PC-3 (cell line): ENCODE measurements at regions of chr4 and their contacts with region 1.

Region 1: DNA sequence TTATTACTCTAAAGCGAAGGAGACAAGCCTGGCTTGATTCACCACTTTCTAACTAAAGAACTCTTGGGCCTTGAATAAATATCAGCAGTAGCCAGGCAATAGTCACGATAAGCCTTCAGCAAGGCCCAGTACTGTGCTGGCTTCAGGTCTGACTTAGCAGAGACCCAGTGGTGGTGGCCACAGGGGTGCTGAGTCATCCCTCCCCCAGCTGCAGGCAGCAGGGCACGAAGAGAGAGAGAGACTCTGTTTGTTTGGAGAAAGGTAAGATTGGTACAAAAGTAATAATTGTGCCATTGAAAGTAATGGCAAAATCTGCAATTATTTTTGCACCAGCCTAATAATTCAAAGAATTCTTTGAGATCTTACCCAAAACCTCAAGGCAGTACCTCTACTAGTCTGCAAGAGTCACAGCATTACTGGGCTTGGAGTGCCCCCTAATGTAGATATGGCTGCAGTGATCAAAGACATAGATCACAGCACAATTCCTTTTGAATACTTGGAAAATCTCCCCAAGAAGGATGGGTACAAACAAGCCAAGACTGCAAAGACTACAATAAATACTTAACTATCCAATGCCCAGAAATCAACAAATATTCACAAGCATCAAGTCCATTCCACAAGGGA is 159.5 kb upstream of the USP38 start:
- DNase-seq: peak; percentile 55
- ATAC-seq: peak; percentile 75
- H3K4me3 ChIP-seq: no peak overlapping the region
- H3K27ac ChIP-seq: no peak overlapping the region
- H3K4me1 ChIP-seq: peaks cover 21% of the 10 kb centered on the region
- H3K27me3 ChIP-seq: no peaks in the 10 kb centered on the region
- CTCF ChIP-seq: peak; percentile 77

Region 2: GRCh38 chr4:142984871-142985585 is 40.2 kb before region 1 on chr4:
- CTCF ChIA-PET with region 1: no interaction called
- POLR2A ChIA-PET with region 1: no interaction called
- intact Hi-C with region 1: loop called (anchors 2 kb)
- DNase-seq: peak; percentile 60
- ATAC-seq: peak; percentile 82
- H3K4me3 ChIP-seq: no peak overlapping the region
- H3K27ac ChIP-seq: no peak overlapping the region
- H3K4me1 ChIP-seq: no peaks in the 10 kb centered on the region
- H3K27me3 ChIP-seq: peaks cover 53% of the 10 kb centered on the region
- CTCF ChIP-seq: peak; percentile 83

Region 3: GRCh38 chr4:143059289-143059688 is 34.1 kb after region 1 on chr4:
- CTCF ChIA-PET with region 1: interaction called, 18 read pairs
- POLR2A ChIA-PET with region 1: no interaction called
- intact Hi-C with region 1: no loop called
- DNase-seq: no peak
- ATAC-seq: no peak
- H3K4me3 ChIP-seq: no peak overlapping the region
- H3K27ac ChIP-seq: no peak overlapping the region
- H3K4me1 ChIP-seq: peaks cover 1% of the 10 kb centered on the region; the same call in 1 of the 2 replicates
- H3K27me3 ChIP-seq: peaks cover 14% of the 10 kb centered on the region
- CTCF ChIP-seq: no peak